Activated B cell treated with CpG ODN at 0.5 μM for 24 hours (primary cell): ENCODE measurements at regions of chr9 and their contacts with region 1.

Region 1: GRCh38 chr9:129028192-129028957 is at the start of gene SH3GLB2:
- DNase-seq: peak; percentile 93
- ATAC-seq: peak; percentile 95
- H3K4me3 Mint-ChIP-seq: peak within 1 kb of the TSS; percentile 85
- H3K27ac Mint-ChIP-seq: peak within 1 kb of the TSS; percentile 66
- H3K4me1 Mint-ChIP-seq: peaks cover 19% of the 10 kb centered on the region
- H3K27me3 Mint-ChIP-seq: no peaks in the 10 kb centered on the region
- CTCF ChIP-seq: no peak
- total RNA-seq, gene SH3GLB2: 60.4 and 62.9 TPM in 2 replicates

Region 2: DNA sequence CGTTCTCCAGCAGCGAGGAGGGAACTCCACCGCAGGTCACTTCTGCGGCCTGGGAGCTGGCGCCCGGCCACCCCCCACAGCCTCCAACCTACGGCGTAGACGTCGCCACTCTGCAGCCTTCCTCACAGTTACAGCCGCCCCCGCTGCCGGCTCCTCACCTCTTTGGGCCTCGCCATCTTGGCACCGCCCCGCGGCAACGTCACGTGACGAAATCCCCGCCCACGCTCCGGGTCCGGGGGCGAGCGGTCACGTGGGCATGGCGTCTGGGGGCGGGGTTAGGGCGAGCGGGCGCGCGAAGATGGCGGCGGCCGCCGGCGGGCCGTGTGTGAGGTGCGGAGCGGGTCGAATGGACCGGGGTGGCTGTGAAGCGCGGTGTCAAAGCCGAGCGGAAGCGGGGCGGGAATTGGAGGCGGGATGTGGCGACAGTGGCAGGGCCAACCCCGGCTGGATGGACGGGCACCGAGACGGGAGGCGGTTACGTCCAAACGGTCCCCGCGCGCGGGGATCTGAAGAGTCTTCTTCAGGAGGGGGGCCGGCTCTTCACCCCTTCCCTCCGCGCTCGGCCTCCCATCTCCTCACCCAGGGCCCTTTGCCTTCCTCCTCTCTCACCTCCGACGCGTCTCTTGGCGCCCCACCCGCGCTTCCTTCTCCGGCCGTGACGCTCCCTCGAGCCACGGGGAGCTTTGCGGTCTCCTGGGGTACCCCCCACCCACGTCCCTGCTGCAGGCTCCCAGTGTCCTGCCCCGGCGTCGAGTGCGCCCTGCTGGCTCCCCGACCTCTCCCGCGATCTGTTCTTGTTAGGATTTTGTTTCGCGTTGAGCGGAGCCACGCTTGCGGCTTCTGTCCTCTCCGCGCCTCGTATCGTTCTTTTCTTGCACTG is 80.7 kb before region 1 on chr9 and contains the starts of genes DOLK and NUP188:
- CTCF ChIA-PET with region 1: no interaction called
- POLR2A ChIA-PET with region 1: interaction called, 12 read pairs
- intact Hi-C with region 1: no loop called
- DNase-seq: peak; percentile 100
- ATAC-seq: peak; percentile 86
- H3K4me3 Mint-ChIP-seq: peak within 1 kb of the TSS; percentile 98
- H3K27ac Mint-ChIP-seq: peak within 1 kb of the TSS; percentile 97
- H3K4me1 Mint-ChIP-seq: peaks cover 29% of the 10 kb centered on the region
- H3K27me3 Mint-ChIP-seq: no peaks in the 10 kb centered on the region
- CTCF ChIP-seq: no peak
- total RNA-seq, gene DOLK: 9.0 and 10.3 TPM in 2 replicates
- total RNA-seq, gene NUP188: 76.9 and 103 TPM in 2 replicates

Region 3: GRCh38 chr9:129052592-129052991 is 24.2 kb after region 1 on chr9:
- CTCF ChIA-PET with region 1: no interaction called
- POLR2A ChIA-PET with region 1: no interaction called
- intact Hi-C with region 1: no loop called
- DNase-seq: no peak
- ATAC-seq: no peak
- H3K4me3 Mint-ChIP-seq: no peak overlapping the region
- H3K27ac Mint-ChIP-seq: no peak overlapping the region
- H3K4me1 Mint-ChIP-seq: no peaks in the 10 kb centered on the region
- H3K27me3 Mint-ChIP-seq: no peaks in the 10 kb centered on the region
- CTCF ChIP-seq: no peak

Region 4: DNA sequence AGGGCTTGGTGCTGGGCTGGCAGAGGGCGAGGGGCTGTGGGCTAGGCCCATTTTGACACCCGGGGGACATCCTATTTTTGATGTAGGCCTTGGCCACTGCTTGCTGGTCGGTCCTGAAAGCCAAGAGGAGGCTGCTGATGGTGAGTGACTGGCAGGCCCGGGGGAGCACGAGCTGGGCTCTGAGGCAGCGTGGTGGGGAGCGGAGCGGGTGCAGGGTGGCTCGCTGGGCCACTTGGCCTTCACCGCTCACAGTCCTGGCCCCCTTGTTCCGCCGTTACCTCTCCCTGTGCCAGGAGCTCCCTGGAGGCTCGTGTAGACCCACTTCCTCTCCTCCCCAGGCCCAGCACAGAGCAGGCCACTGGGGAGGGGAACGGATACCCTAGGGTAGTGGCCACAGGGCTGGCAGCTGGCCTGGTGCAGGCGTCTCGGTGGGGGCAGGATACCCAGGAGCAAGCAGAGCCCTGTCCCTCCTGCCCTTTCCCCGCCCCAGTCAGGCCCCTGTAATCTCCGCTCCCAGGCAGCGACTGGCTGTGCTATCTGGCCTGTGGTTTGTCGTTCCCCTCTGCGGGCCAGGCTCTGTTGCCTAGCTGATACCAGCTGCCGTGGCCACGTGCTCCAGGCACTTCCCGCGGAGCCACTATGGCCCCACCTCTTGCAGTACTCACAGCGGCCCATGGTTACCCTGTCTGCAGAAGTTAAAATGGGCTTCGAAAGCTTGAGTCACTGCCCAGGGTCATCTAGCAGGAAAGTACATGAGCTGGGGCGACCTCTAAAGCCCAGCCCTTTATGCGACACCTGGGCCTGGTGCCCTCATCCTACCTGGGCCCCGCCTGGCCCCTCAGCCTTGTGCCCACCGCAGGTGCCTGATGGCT is 40.9 kb after region 1 on chr9:
- CTCF ChIA-PET with region 1: interaction called, 4 read pairs
- POLR2A ChIA-PET with region 1: interaction called, 6 read pairs
- intact Hi-C with region 1: loop called (anchors 1 kb)
- DNase-seq: peak; percentile 63
- ATAC-seq: peak; percentile 97
- H3K4me3 Mint-ChIP-seq: peak overlapping the region; percentile 65
- H3K27ac Mint-ChIP-seq: peak overlapping the region; percentile 93
- H3K4me1 Mint-ChIP-seq: peaks cover 26% of the 10 kb centered on the region
- H3K27me3 Mint-ChIP-seq: no peaks in the 10 kb centered on the region
- CTCF ChIP-seq: no peak

Region 5: GRCh38 chr9:129080602-129081387 is 52.4 kb after region 1 on chr9 and contains the start of gene DOLPP1:
- CTCF ChIA-PET with region 1: no interaction called
- POLR2A ChIA-PET with region 1: interaction called, 10 read pairs
- intact Hi-C with region 1: loop called (anchors 1 kb)
- DNase-seq: peak; percentile 97
- ATAC-seq: peak; percentile 95
- H3K4me3 Mint-ChIP-seq: peak within 1 kb of the TSS; percentile 87
- H3K27ac Mint-ChIP-seq: peak within 1 kb of the TSS; percentile 76
- H3K4me1 Mint-ChIP-seq: peaks cover 29% of the 10 kb centered on the region
- H3K27me3 Mint-ChIP-seq: no peaks in the 10 kb centered on the region
- CTCF ChIP-seq: no peak
- total RNA-seq, gene DOLPP1: 10.9 and 11.3 TPM in 2 replicates

Region 6: DNA sequence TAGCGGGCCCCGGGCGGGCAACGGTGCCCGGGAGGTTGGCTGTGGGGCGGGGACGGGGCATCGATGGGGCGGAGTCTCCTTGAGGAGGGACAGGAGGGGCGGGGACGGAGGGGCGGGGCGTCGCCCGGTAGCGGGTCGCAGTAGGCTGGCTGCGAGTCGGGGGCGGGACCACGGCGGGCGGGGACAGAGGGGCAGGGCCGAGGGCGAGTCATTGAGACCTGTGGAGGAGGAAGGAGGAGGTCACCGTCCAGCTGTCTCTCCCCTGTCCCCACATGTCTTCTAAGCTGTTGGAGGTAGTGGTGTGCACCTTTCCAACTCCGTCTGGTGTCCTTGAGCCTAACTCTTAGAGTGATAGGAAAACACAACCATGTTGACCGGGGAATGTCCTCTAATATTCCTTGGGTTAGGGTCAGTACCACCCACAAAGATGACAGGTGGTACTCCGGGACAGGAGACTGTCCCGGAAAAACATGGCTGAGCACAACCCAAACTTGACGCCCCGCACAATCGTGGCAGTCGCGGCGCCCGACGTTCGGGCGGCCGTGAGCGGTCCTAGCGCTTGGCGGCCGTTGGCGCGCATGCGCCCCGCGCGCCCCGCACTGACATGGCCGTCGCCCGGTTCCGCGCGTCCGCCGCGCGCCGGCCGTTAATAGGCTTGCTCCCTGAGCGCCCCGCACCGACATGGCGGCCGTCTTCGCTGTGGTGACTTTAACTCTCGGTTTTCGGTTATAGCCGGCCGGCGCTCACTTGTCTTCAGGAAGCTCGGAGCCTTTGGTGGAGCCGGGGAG is 82.6 kb after region 1 on chr9 and contains the starts of genes CRAT and PTPA:
- CTCF ChIA-PET with region 1: no interaction called
- POLR2A ChIA-PET with region 1: interaction called, 4 read pairs
- intact Hi-C with region 1: loop called (anchors 1 kb)
- DNase-seq: peak; percentile 91
- ATAC-seq: peak; percentile 88
- H3K4me3 Mint-ChIP-seq: peak within 1 kb of the TSS; percentile 95
- H3K27ac Mint-ChIP-seq: peak within 1 kb of the TSS; percentile 95
- H3K4me1 Mint-ChIP-seq: peaks cover 39% of the 10 kb centered on the region
- H3K27me3 Mint-ChIP-seq: no peaks in the 10 kb centered on the region
- CTCF ChIP-seq: no peak
- total RNA-seq, gene CRAT: 6.8 and 8.2 TPM in 2 replicates
- total RNA-seq, gene PTPA: 65.5 and 67.2 TPM in 2 replicates